CD8-positive, alpha-beta T cell (primary cell): ENCODE measurements at regions of chr19 and their contacts with region 1.

Region 1: DNA sequence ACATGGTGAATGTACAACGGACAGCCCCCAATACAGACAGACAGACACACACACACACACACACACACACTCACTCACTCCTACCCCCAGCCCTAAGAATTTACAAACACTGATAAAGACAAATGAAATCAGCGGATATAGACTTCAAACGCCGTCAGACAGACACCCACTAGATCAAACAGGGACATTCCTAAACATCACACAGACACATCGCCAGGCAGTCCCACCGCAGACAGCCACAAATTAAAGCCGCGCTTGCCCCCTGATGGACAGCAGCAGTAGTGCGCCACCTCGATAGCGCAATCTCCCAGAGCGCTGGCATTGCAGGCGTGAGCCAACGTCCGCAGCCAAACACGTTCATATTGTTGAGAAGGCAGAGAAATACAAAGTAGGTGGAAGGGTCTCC is 24.7 kb upstream of the ADGRE1 start:
- DNase-seq: peak; percentile 84 to 96 (median 91)
- ATAC-seq: peak; percentile 90
- H3K4me3 ChIP-seq: peak overlapping the region in 1 of 2 experiments; percentile 33
- H3K4me3 Mint-ChIP-seq: peak overlapping the region; percentile 80
- H3K27ac ChIP-seq: peak overlapping the region in 1 of 2 experiments; percentile 68
- H3K27ac Mint-ChIP-seq: peak overlapping the region; percentile 74
- H3K4me1 ChIP-seq: peaks cover 4% of the 10 kb centered on the region
- H3K4me1 Mint-ChIP-seq: peaks cover 17% of the 10 kb centered on the region
- H3K27me3 ChIP-seq: no peaks in the 10 kb centered on the region
- H3K27me3 Mint-ChIP-seq: no peaks in the 10 kb centered on the region
- CTCF ChIP-seq: peak; percentile 61

Region 2: GRCh38 chr19:6279931-6280591 is 582.6 kb before region 1 on chr19 and contains the start of gene MLLT1:
- CTCF ChIA-PET with region 1: no interaction called
- POLR2A ChIA-PET with region 1: no interaction called
- intact Hi-C with region 1: loop called in 1 of 2 experiments (anchors 10 kb)
- DNase-seq: peak; percentile 88 to 98 (median 93)
- ATAC-seq: peak; percentile 85
- H3K4me3 ChIP-seq: peak within 1 kb of the TSS; percentile 60 to 61
- H3K4me3 Mint-ChIP-seq: peak within 1 kb of the TSS; percentile 88
- H3K27ac ChIP-seq: peak within 1 kb of the TSS; percentile 50 to 77
- H3K27ac Mint-ChIP-seq: peak within 1 kb of the TSS; percentile 93
- H3K4me1 ChIP-seq: peaks cover 26% of the 10 kb centered on the region
- H3K4me1 Mint-ChIP-seq: peaks cover 44% of the 10 kb centered on the region
- H3K27me3 ChIP-seq: no peaks in the 10 kb centered on the region
- H3K27me3 Mint-ChIP-seq: no peaks in the 10 kb centered on the region
- CTCF ChIP-seq: peak; percentile 85
- total RNA-seq, gene MLLT1: 11.8 to 15.0 TPM

Region 3: GRCh38 chr19:6516659-6517291 is 345.9 kb before region 1 on chr19:
- CTCF ChIA-PET with region 1: interaction called, 17 read pairs
- POLR2A ChIA-PET with region 1: interaction called, 7 read pairs
- intact Hi-C with region 1: loop called (anchors 1 kb)
- DNase-seq: peak; percentile 80 to 97 (median 91)
- ATAC-seq: peak; percentile 85
- H3K4me3 ChIP-seq: peak overlapping the region; percentile 78
- H3K4me3 Mint-ChIP-seq: peak overlapping the region; percentile 90
- H3K27ac ChIP-seq: peak overlapping the region in 1 of 2 experiments; percentile 52
- H3K27ac Mint-ChIP-seq: peak overlapping the region; percentile 33
- H3K4me1 ChIP-seq: peaks cover 26% of the 10 kb centered on the region
- H3K4me1 Mint-ChIP-seq: peaks cover 31% of the 10 kb centered on the region
- H3K27me3 ChIP-seq: no peaks in the 10 kb centered on the region
- H3K27me3 Mint-ChIP-seq: no peaks in the 10 kb centered on the region
- CTCF ChIP-seq: peak; percentile 85

Region 4: DNA sequence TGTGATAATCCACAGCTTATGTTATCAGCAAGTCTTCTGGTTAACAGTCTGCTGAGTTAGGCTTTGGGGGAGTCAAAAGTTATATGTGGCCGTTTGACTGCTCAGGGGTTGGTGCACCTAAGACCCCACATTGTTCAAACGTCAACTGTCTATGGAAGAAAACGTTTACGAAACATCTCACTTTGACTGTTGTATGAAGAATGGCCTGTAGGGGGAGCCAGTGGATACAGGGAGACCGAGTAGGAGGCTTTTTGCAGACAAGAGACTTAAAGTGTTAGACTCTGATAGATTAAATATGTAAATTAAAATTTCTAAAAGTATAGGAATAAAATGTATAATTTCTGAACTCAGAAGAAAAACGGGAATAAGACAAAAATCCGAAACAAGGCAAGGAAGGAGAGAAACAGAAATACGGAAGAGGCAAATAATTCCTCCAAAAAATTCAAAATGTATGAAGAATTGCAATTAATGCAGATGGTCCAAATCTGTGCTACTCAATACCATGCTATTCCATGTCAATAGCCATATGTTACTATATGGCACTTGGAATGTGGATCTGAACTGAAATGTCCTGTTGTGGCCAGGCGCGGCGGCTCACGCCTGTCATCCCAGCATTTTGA is 230.6 kb before region 1 on chr19:
- CTCF ChIA-PET with region 1: interaction called, 32 read pairs
- POLR2A ChIA-PET with region 1: no interaction called
- intact Hi-C with region 1: loop called in 1 of 2 experiments (anchors 1 kb)
- DNase-seq: peak; percentile 52 to 90 (median 84)
- ATAC-seq: peak; percentile 96
- H3K4me3 ChIP-seq: no peak overlapping the region
- H3K4me3 Mint-ChIP-seq: no peak overlapping the region
- H3K27ac ChIP-seq: no peak overlapping the region
- H3K27ac Mint-ChIP-seq: no peak overlapping the region
- H3K4me1 ChIP-seq: no peaks in the 10 kb centered on the region
- H3K4me1 Mint-ChIP-seq: peaks cover 12% of the 10 kb centered on the region
- H3K27me3 ChIP-seq: no peaks in the 10 kb centered on the region
- H3K27me3 Mint-ChIP-seq: peaks cover 3% of the 10 kb centered on the region
- CTCF ChIP-seq: peak; percentile 85

Region 5: GRCh38 chr19:6767357-6768235 is 95.1 kb before region 1 on chr19 and contains the start of gene SH2D3A:
- CTCF ChIA-PET with region 1: interaction called, 11 read pairs
- POLR2A ChIA-PET with region 1: interaction called, 7 read pairs
- intact Hi-C with region 1: loop called (anchors 1 kb)
- DNase-seq: peak; percentile 88 to 99 (median 96)
- ATAC-seq: peak; percentile 74
- H3K4me3 ChIP-seq: peak within 1 kb of the TSS; percentile 57 to 58
- H3K4me3 Mint-ChIP-seq: peak within 1 kb of the TSS; percentile 87
- H3K27ac ChIP-seq: peak within 1 kb of the TSS; percentile 84 to 97
- H3K27ac Mint-ChIP-seq: peak within 1 kb of the TSS; percentile 97
- H3K4me1 ChIP-seq: peaks cover 43% of the 10 kb centered on the region
- H3K4me1 Mint-ChIP-seq: peaks cover 50% of the 10 kb centered on the region
- H3K27me3 ChIP-seq: no peaks in the 10 kb centered on the region
- H3K27me3 Mint-ChIP-seq: no peaks in the 10 kb centered on the region
- CTCF ChIP-seq: no peak
- total RNA-seq, gene SH2D3A: 33.5 to 38.8 TPM

Region 6: GRCh38 chr19:6876748-6877147 is 14.1 kb after region 1 on chr19:
- CTCF ChIA-PET with region 1: interaction called, 33 read pairs
- POLR2A ChIA-PET with region 1: interaction called, 3 read pairs
- intact Hi-C with region 1: no loop called
- DNase-seq: no peak
- ATAC-seq: no peak
- H3K4me3 ChIP-seq: no peak overlapping the region
- H3K4me3 Mint-ChIP-seq: no peak overlapping the region
- H3K27ac ChIP-seq: no peak overlapping the region
- H3K27ac Mint-ChIP-seq: no peak overlapping the region
- H3K4me1 ChIP-seq: peaks cover 8% of the 10 kb centered on the region
- H3K4me1 Mint-ChIP-seq: peaks cover 8% of the 10 kb centered on the region
- H3K27me3 ChIP-seq: no peaks in the 10 kb centered on the region
- H3K27me3 Mint-ChIP-seq: no peaks in the 10 kb centered on the region
- CTCF ChIP-seq: no peak